Right lobe of liver (tissue), 6 donors: ENCODE measurements at regions of chr9 and their contacts with region 1.

Region 1: DNA sequence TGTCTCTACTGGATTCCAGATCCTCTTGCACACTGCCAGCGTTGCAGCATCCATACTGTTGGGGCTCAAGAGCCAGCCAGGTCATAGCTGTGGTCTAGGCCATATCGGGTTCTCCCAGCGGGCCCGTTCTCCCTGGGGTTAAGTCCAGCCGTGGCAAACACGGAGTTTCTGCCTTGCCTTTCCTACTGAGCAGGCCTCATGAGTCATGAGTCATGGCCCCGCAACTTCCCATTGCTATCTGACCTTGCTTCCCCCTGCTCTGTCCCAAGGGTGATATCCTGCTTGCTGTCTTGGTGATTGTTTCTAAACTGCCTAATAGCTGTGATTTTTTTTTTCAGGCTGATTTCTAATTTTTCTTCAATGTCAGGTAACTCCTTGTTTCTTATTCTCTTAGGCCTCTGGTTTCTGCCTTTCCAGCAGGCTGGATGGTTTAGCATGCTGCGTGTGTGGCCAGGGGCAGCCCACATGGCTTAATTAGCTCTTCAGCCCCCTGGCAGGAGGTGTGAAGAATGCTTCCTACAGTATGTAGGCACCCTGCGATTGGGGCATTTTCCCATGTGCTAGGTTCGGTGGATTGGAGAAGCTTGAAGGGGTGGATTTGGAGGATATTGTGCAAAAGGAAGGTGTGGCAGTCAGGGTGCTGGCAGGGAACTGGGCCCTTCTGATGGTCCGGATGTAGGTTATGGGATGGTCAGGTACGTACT is 18.7 kb downstream of the DAPK1 start:
- DNase-seq: peak; percentile 66 to 73 (median 72)
- ATAC-seq: peak; percentile 66 to 83 (median 76)
- H3K4me3 ChIP-seq: no peak overlapping the region
- H3K27ac ChIP-seq: peak overlapping the region; percentile 19 to 53 (median 19)
- H3K4me1 ChIP-seq: peaks cover 0 to 32% (median 13%) of the 10 kb centered on the region in 4 donors
- H3K27me3 ChIP-seq: no peaks in the 10 kb centered on the region
- CTCF ChIP-seq: no peak
- POLR2A ChIP-seq: no peak

Region 2: GRCh38 chr9:87569518-87569917 is 53.1 kb after region 1 on chr9:
- intact Hi-C with region 1: loop called in 1 of 2 experiments (anchors 10 kb)
- DNase-seq: no peak
- ATAC-seq: peak; percentile 42 to 65 (median 44)
- H3K4me3 ChIP-seq: peak overlapping the region in 2 of 3 donors; percentile 1 to 7
- H3K27ac ChIP-seq: peak overlapping the region; percentile 47 to 87 (median 87)
- H3K4me1 ChIP-seq: peaks cover 3 to 62% (median 31%) of the 10 kb centered on the region in 4 donors
- H3K27me3 ChIP-seq: no peaks in the 10 kb centered on the region
- CTCF ChIP-seq: no peak
- POLR2A ChIP-seq: no peak

Region 3: DNA sequence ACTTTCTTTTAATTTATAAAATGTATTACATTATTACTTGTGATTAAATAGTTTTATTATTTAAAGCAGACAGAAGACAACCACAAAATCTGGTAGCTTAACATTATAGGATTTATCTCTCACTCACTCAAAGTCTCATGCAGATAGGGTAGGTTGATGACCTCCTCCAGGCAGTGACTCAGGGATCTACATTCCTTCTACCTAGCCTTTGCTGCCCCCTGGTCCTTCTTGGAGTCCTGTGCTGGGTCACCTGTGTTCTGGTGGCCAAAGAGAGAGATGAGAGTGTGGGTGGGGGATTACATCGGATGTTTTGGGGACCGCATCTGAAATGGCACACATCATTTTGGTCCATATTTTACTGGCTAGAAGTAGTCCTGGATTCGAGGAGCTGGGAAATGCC is 113.9 kb after region 1 on chr9:
- intact Hi-C with region 1: loop called in 1 of 2 experiments (anchors 10 kb)
- DNase-seq: no peak
- ATAC-seq: no peak
- H3K4me3 ChIP-seq: no peak overlapping the region
- H3K27ac ChIP-seq: no peak overlapping the region
- H3K4me1 ChIP-seq: peaks cover 0 to 6% (median 1%) of the 10 kb centered on the region in 4 donors
- H3K27me3 ChIP-seq: no peaks in the 10 kb centered on the region
- CTCF ChIP-seq: no peak
- POLR2A ChIP-seq: no peak

Region 4: DNA sequence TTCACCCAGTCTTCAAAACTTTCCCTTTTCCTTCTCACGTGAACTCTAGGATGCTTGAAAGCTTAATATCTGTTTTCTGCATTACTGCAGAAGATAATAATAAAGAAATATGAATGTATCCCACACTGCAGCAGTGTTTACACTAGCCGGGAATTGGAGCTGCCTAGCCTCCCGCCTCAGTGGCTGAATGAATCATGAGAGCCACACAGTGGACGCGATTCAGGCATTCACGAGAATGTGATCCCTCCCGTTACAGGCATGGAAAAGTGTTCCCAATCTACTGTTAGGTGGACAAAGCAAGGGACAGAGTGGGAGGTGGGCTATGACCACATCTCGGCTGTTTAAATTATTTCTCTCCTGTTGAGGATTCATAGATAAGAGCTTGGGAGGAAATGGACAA is 140.1 kb after region 1 on chr9:
- intact Hi-C with region 1: loop called in 1 of 2 experiments (anchors 10 kb)
- DNase-seq: no peak
- ATAC-seq: peak in 2 of 4 donors; percentile 33 to 34
- H3K4me3 ChIP-seq: no peak overlapping the region
- H3K27ac ChIP-seq: peak overlapping the region in 2 of 3 donors; percentile 4 to 35
- H3K4me1 ChIP-seq: no peaks in the 10 kb centered on the region
- H3K27me3 ChIP-seq: no peaks in the 10 kb centered on the region
- CTCF ChIP-seq: no peak
- POLR2A ChIP-seq: no peak